Calu3 (cell line): ENCODE measurements at regions of chr7 and their contacts with region 1.

Region 1: DNA sequence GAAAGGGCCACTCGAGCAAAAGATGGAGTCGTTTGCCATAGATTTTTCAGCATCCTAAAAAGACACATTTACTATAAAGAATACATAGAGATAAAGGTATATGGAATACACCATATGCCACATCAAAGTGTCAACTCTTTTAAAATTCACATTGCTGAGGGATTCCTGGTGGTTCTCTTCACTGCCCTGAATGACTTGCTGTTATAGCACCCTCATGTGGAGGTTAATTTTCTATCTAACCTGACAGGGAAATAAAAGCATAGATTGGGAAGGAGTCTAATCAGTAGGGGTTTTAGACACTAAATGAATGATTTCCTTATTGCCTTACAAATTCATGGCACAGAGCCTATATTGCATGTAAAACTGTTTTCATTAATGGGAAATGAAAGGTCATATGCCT is 25.9 kb downstream of the DNAH11 start:
- DNase-seq: peak; percentile 24
- H3K4me3 Mint-ChIP-seq: no peak overlapping the region
- H3K27ac Mint-ChIP-seq: no peak overlapping the region
- H3K4me1 Mint-ChIP-seq: peaks cover 11% of the 10 kb centered on the region
- H3K27me3 Mint-ChIP-seq: no peaks in the 10 kb centered on the region
- CTCF ChIP-seq: no peak

Region 2: DNA sequence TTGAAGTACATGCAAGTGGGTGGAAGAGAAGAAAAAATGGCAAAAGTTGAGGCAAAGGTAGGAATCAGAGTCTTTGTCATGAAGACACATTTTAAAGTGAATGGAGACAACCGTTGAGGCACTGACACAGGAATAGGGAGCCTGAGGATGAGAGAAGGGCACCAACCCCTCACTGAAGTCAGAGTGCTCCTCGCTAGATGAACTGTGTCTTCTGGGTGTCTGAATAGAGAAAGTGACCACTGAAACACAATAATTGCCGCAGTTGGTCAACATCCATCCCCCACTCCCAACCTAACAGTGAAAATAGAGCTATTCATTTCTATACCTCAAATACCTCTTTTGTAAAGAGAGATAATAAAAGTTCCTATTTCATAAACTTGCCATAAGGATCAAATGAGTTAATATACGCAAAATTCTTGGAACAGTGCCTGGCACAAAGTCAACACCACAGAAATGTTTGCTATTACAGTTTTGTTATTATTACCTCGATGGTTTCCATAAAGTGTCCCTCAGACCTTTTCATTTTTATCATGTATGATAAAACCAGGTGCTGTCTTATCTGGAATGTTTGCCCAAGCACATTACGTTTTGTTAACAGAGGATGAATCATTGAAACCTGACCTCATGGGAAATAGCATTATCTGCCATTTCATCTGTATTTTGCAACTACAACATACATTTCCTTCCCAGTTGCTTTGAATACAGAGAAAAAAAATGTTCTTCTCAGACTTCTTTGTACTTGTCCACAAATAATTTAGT is 202.7 kb before region 1 on chr7:
- CTCF ChIA-PET with region 1: no interaction called
- intact Hi-C with region 1: loop called (anchors 5 kb)
- DNase-seq: peak; percentile 69
- H3K4me3 Mint-ChIP-seq: peak overlapping the region; percentile 6
- H3K27ac Mint-ChIP-seq: peak overlapping the region; percentile 0
- H3K4me1 Mint-ChIP-seq: peaks cover 60% of the 10 kb centered on the region
- H3K27me3 Mint-ChIP-seq: no peaks in the 10 kb centered on the region
- CTCF ChIP-seq: no peak

Region 3: GRCh38 chr7:21550826-21551544 is 17.8 kb before region 1 on chr7:
- CTCF ChIA-PET with region 1: interaction called, 8 read pairs
- intact Hi-C with region 1: loop called (anchors 1 kb)
- DNase-seq: peak; percentile 80
- H3K4me3 Mint-ChIP-seq: peak overlapping the region; percentile 18
- H3K27ac Mint-ChIP-seq: peak overlapping the region; percentile 79
- H3K4me1 Mint-ChIP-seq: peaks cover 26% of the 10 kb centered on the region
- H3K27me3 Mint-ChIP-seq: no peaks in the 10 kb centered on the region
- CTCF ChIP-seq: no peak

Region 4: GRCh38 chr7:21603972-21604749 is 35.4 kb after region 1 on chr7:
- CTCF ChIA-PET with region 1: no interaction called
- intact Hi-C with region 1: no loop called
- DNase-seq: no peak
- H3K4me3 Mint-ChIP-seq: no peak overlapping the region
- H3K27ac Mint-ChIP-seq: no peak overlapping the region
- H3K4me1 Mint-ChIP-seq: peaks cover 11% of the 10 kb centered on the region
- H3K27me3 Mint-ChIP-seq: no peaks in the 10 kb centered on the region
- CTCF ChIP-seq: no peak